Ascending aorta (tissue), 2 donors: ENCODE measurements at regions of chr1 and their contacts with region 1.

Region 1: DNA sequence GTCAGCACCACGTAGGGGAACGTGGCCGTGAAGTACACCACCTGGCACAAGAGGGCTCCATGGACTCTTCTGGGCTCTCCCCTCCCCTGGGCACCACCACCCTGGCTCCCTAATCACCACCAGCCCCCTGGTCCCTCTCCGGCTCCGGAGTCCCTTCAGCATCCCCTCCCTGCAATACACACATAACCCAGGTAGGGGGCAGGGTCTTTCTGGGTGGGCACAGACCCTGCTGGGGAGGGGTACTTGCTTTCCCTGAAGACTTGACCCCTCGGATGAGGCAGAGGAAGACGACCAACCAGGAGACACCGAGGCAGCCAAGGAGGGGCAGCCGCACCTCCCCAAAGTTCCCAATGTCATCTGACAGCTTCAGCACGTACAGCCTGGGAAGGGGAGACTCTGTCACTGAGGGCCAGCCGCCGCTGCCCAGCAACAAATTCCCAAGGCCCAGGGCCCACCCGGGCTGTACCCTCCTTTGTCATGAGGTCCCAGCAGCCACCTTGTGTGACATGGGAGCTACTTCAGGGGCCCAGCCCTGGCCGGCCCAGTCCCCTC is 11.3 kb downstream of the CCDC24 start:
- DNase-seq: no peak
- H3K4me3 ChIP-seq: no peak overlapping the region
- H3K27ac ChIP-seq: no peak overlapping the region
- H3K4me1 ChIP-seq: peaks cover 3 to 4% of the 10 kb centered on the region in 2 donors
- H3K27me3 ChIP-seq: no peaks in the 10 kb centered on the region
- CTCF ChIP-seq: no peak

Region 2: DNA sequence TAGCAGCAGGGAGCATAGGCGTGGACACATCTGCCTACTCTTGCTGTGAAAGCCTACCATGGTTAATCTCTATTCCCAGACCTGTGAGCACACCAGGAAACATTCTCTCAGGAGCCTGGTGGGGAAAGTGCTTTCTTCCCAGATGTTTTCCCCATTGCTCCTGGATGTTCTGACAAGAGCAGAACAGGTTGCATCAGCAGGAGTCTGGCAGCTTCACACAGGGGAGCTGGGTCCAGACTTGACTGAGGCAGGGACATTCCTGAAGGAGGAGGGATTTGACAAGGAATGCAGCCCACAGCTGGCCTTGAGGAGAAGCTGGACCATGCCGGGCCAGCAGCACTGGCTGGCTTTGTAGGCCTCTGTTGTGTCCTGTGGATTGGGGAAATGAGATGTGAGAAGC is 90.1 kb before region 1 on chr1:
- intact Hi-C with region 1: no loop called
- DNase-seq: peak in 1 of 2 donors; percentile 59
- H3K4me3 ChIP-seq: no peak overlapping the region
- H3K27ac ChIP-seq: no peak overlapping the region
- H3K4me1 ChIP-seq: no peaks in the 10 kb centered on the region
- H3K27me3 ChIP-seq: no peaks in the 10 kb centered on the region
- CTCF ChIP-seq: no peak

Region 3: DNA sequence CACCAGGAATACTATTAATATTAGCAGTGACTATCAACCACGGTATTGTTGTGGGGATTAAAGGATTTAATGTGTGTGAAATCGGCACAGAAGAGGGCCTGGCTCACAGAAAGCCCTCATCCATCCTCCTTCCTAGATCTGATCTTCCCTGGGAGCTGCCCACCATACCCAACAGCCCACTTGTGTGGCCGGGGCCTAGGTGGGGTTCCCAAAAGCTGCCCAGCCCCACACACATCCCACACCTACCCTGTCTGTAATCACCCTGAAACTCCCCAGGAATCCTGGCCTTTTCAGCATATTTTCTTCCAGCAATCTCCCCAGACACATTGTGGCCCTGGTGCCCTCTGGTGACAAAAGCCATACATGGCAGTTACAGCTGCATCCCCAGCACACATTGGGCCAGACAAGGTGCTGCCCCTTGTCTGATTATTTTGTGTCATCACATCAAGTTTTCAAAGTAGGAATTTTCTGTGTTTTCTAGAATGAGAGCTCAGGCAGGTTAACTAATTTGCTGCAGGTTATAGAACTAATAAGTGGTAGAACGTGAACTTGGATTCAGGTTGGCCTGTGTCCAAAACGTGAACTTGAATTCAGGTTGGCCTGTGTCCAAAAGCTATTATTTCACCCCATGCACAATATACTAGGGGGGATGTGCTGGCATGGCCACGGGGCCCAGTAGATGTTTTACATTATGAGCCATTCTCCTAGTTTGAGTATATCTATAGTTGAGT is 33.9 kb after region 1 on chr1:
- intact Hi-C with region 1: loop called (anchors 1 kb)
- DNase-seq: peak in 1 of 2 donors; percentile 86
- H3K4me3 ChIP-seq: no peak overlapping the region
- H3K27ac ChIP-seq: peak overlapping the region; percentile 73 to 83
- H3K4me1 ChIP-seq: peaks cover 17 to 27% of the 10 kb centered on the region in 2 donors
- H3K27me3 ChIP-seq: no peaks in the 10 kb centered on the region
- CTCF ChIP-seq: peak; percentile 73 to 86 (median 84)

Region 4: DNA sequence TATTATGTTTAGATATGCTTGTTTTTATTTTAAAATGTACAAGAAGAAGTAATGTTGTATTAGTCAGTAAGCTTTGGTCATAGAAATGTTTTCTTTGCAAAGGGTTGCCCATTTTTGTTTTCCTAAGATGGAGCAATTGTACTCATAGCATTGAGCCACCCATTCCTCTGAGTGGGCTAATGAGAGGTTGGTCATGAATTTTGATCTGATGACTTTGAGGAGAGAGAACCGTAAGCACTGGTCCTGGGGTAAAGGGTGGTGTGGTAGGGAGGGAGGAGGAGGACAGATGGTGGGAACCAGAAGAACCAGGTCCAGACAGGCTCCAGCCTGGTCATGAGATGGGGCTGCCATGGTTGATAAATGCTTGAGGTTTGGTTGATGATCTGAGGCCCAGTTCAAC is 44.4 kb after region 1 on chr1:
- intact Hi-C with region 1: loop called (anchors 1 kb)
- DNase-seq: no peak
- H3K4me3 ChIP-seq: peak overlapping the region in 1 of 2 donors; percentile 47
- H3K27ac ChIP-seq: peak overlapping the region; percentile 78 to 85
- H3K4me1 ChIP-seq: peaks cover 0 to 23% of the 10 kb centered on the region in 2 donors
- H3K27me3 ChIP-seq: no peaks in the 10 kb centered on the region
- CTCF ChIP-seq: no peak